Endothelial cell of umbilical vein (primary cell): ENCODE measurements at regions of chr11 and their contacts with region 1.

Region 1: DNA sequence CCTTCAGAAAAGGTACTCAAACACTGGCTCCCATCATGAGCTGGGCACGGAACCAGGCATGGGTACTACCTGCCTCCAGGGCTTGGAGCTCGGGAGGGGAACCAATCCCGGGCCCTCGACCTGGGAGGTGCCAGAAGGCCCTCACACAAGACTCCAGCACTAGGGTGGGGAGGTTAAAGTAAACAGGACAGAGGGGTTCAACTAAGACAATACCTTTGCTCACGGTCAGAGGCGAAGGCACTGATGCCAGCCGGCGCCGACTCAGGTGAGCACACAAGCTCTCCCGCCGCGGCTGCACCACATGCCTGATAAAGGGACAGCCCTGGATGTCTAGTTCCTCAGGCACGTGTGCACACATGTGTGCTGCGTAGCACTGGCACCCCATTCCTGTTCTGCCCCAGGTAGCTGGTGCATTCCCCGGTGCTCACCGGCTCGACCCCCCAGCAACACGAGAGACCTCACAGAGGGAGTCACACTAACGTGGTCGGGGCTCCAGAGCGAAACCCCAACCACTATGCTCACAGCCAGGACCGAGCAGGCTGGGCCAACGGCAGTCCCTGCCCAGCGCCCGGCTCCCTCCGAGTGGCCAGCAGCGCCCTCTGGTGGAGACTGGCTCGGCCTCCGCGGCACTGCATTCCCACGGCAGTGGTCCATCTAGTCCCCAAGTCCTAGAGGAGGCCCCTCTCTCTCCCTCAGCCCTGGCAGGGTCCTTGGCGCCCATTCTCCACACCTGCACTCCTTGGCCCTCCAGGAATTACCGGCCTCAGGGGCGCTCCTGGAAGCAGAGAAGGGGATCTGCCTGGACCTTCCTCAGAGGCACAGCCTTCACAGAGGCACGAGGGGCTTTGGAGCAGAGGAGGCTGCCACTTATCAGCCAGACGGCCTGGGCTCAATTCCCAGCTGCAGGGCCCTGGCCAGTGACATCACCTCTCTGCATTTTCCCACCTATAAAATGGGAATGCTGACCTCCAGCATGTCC is 28.8 kb upstream of the MOB2 start:
- DNase-seq: peak; percentile 63
- H3K4me3 ChIP-seq: no peak overlapping the region
- H3K27ac ChIP-seq: no peak overlapping the region
- H3K4me1 ChIP-seq: no peaks in the 10 kb centered on the region
- H3K27me3 ChIP-seq: no peaks in the 10 kb centered on the region
- CTCF ChIP-seq: peak; percentile 93 to 98
- POLR2A ChIP-seq: no peak

Region 2: GRCh38 chr11:1113405-1114201 is 401.8 kb before region 1 on chr11:
- CTCF ChIA-PET with region 1: no interaction called
- POLR2A ChIA-PET with region 1: no interaction called
- dilution Hi-C with region 1: no loop called
- intact Hi-C with region 1: loop called (anchors 1 kb)
- DNase-seq: no peak
- H3K4me3 ChIP-seq: no peak overlapping the region
- H3K27ac ChIP-seq: no peak overlapping the region
- H3K4me1 ChIP-seq: no peaks in the 10 kb centered on the region
- H3K27me3 ChIP-seq: no peaks in the 10 kb centered on the region
- CTCF ChIP-seq: no peak
- POLR2A ChIP-seq: no peak

Region 3: GRCh38 chr11:1219834-1220815 is 295.2 kb before region 1 on chr11:
- CTCF ChIA-PET with region 1: no interaction called
- POLR2A ChIA-PET with region 1: no interaction called
- dilution Hi-C with region 1: no loop called
- intact Hi-C with region 1: loop called (anchors 5 kb)
- DNase-seq: no peak
- H3K4me3 ChIP-seq: no peak overlapping the region
- H3K27ac ChIP-seq: no peak overlapping the region
- H3K4me1 ChIP-seq: no peaks in the 10 kb centered on the region
- H3K27me3 ChIP-seq: no peaks in the 10 kb centered on the region
- CTCF ChIP-seq: no peak
- POLR2A ChIP-seq: no peak

Region 4: GRCh38 chr11:1303126-1303821 is 212.1 kb before region 1 on chr11:
- CTCF ChIA-PET with region 1: no interaction called
- POLR2A ChIA-PET with region 1: no interaction called
- dilution Hi-C with region 1: no loop called
- intact Hi-C with region 1: loop called (anchors 2 kb)
- DNase-seq: peak; percentile 17
- H3K4me3 ChIP-seq: no peak overlapping the region
- H3K27ac ChIP-seq: no peak overlapping the region
- H3K4me1 ChIP-seq: peaks cover 6% of the 10 kb centered on the region
- H3K27me3 ChIP-seq: no peaks in the 10 kb centered on the region
- CTCF ChIP-seq: peak; percentile 44 to 48
- POLR2A ChIP-seq: no peak

Region 5: GRCh38 chr11:1458340-1459218 is 56.8 kb before region 1 on chr11:
- CTCF ChIA-PET with region 1: interaction called, 3 read pairs
- POLR2A ChIA-PET with region 1: no interaction called
- dilution Hi-C with region 1: no loop called
- intact Hi-C with region 1: loop called (anchors 1 kb)
- DNase-seq: no peak
- H3K4me3 ChIP-seq: no peak overlapping the region
- H3K27ac ChIP-seq: no peak overlapping the region
- H3K4me1 ChIP-seq: no peaks in the 10 kb centered on the region
- H3K27me3 ChIP-seq: no peaks in the 10 kb centered on the region
- CTCF ChIP-seq: peak; percentile 5 to 53
- POLR2A ChIP-seq: no peak

Region 6: DNA sequence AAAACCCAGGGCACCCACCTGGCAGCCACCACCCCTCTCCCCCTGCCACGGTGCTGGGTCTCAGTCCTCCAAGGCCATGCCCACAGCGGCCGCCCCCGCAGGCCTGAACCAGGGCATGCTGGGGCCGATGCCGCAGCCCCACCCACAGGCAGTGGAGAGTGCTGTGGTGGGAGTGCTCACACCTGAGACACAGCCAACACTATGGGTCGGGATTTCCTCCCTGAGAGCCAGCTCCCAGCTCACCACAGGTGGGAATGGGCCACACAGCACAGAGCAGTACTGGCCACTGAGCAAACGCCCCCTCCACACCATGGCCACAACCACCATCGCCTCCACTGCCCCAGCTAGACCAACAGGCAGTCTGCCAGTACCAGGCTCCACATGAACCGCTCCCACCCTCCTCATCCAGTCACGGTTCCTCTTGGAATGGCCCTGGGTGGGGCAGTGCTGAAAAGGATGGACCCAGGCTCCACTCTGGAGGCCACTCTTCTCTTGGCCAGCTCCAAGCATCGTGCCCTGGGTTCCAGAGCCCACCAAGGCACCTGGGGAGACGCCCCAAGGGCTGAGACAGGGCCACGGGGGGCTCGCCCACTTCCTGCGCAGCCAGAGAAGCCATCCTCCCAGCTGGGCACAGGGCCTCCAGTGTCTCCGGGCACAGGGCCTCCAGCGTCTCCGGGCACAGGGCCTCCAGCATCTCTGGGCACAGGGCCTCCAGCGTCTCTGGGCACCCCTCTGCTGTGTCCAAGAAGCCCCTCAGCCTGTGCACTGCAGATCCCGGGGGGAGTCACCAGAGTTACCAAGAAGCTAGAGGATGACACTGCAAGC is 43.0 kb before region 1 on chr11:
- CTCF ChIA-PET with region 1: no interaction called
- POLR2A ChIA-PET with region 1: no interaction called
- dilution Hi-C with region 1: no loop called
- intact Hi-C with region 1: no loop called
- DNase-seq: no peak
- H3K4me3 ChIP-seq: no peak overlapping the region
- H3K27ac ChIP-seq: no peak overlapping the region
- H3K4me1 ChIP-seq: no peaks in the 10 kb centered on the region
- H3K27me3 ChIP-seq: no peaks in the 10 kb centered on the region
- CTCF ChIP-seq: no peak
- POLR2A ChIP-seq: no peak